T-cell (primary cell): ENCODE measurements at regions of chr1 and their contacts with region 1.

Region 1: GRCh38 chr1:193462629-193463320 is 276.4 kb upstream of the B3GALT2 start:
- DNase-seq: peak in 1 of 35 experiments; percentile 48
- ATAC-seq: peak; percentile 70 to 81 (median 79)
- H3K4me3 ChIP-seq: peak overlapping the region in 1 of 2 donors; percentile 15
- H3K4me3 Mint-ChIP-seq: peak overlapping the region; percentile 55 to 67 (median 66)
- H3K27ac ChIP-seq: peak overlapping the region; percentile 92
- H3K27ac Mint-ChIP-seq: peak overlapping the region; percentile 92 to 96
- H3K4me1 ChIP-seq: peaks cover 5 to 8% of the 10 kb centered on the region in 2 experiments
- H3K4me1 Mint-ChIP-seq: peaks cover 27 to 59% (median 50%) of the 10 kb centered on the region in 3 donors
- H3K27me3 ChIP-seq: no peaks in the 10 kb centered on the region
- H3K27me3 Mint-ChIP-seq: no peaks in the 10 kb centered on the region

Region 2: GRCh38 chr1:193348091-193348768 is 114.5 kb before region 1 on chr1:
- CTCF ChIA-PET with region 1: interaction called in 1 of 2 experiments, 15 read pairs
- POLR2A ChIA-PET with region 1: no interaction called
- DNase-seq: no peak
- ATAC-seq: no peak
- H3K4me3 ChIP-seq: no peak overlapping the region
- H3K4me3 Mint-ChIP-seq: no peak overlapping the region
- H3K27ac ChIP-seq: no peak overlapping the region
- H3K27ac Mint-ChIP-seq: no peak overlapping the region
- H3K4me1 ChIP-seq: no peaks in the 10 kb centered on the region
- H3K4me1 Mint-ChIP-seq: no peaks in the 10 kb centered on the region
- H3K27me3 ChIP-seq: no peaks in the 10 kb centered on the region
- H3K27me3 Mint-ChIP-seq: no peaks in the 10 kb centered on the region

Region 3: GRCh38 chr1:193479187-193479586 is 16.4 kb after region 1 on chr1:
- CTCF ChIA-PET with region 1: interaction called, 5 to 14 read pairs
- POLR2A ChIA-PET with region 1: interaction called in 1 of 2 experiments, 4 read pairs
- DNase-seq: peak; percentile 48 to 94 (median 82)
- ATAC-seq: peak; percentile 93 to 97 (median 94)
- H3K4me3 ChIP-seq: no peak overlapping the region
- H3K4me3 Mint-ChIP-seq: peak overlapping the region; percentile 1 to 56 (median 34)
- H3K27ac ChIP-seq: peak overlapping the region; percentile 88
- H3K27ac Mint-ChIP-seq: peak overlapping the region; percentile 93 to 99
- H3K4me1 ChIP-seq: peaks cover 8 to 10% of the 10 kb centered on the region in 2 experiments
- H3K4me1 Mint-ChIP-seq: peaks cover 61 to 70% (median 66%) of the 10 kb centered on the region in 3 donors
- H3K27me3 ChIP-seq: no peaks in the 10 kb centered on the region
- H3K27me3 Mint-ChIP-seq: no peaks in the 10 kb centered on the region

Region 4: DNA sequence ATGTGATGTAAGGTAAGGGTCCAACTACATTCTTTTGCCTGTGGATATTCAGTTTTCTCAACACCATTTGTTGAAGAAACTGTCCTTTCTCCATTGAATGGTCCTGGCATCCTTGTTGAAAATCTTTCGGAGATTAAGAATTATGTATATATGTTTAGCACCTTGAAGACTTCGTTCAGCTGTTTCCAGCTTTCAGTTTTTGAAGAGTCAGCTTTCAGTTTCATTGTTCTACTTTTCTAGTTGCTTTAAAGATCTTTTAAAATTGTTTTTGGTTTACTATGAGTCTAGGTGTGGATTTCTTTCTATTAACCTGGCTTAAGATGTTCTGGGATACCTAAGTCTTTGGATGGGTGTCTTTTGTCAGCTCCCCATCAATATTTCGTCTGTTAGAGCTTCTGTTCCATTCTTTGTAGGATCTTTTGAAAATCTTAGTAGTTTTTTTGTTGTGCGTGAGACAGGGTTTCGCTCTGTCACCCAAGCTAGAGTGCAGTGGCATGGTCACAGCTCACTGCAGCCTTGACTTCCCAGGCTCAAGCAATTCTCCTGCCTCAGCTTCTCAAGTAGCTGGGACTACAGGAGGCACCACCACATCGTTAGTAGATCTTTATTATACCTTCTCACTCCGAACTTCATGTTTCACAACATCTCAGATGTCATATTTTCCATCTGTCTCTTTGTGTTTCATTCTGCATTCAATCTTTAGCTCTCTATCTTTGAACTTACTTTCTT is 77.1 kb after region 1 on chr1:
- CTCF ChIA-PET with region 1: interaction called, 3 to 4 read pairs
- POLR2A ChIA-PET with region 1: interaction called in 1 of 2 experiments, 10 read pairs
- DNase-seq: peak in 10 of 35 experiments; percentile 0 to 36 (median 12)
- ATAC-seq: peak; percentile 56 to 61 (median 57)
- H3K4me3 ChIP-seq: peak overlapping the region in 1 of 2 donors; percentile 27
- H3K4me3 Mint-ChIP-seq: peak overlapping the region; percentile 69 to 74 (median 73)
- H3K27ac ChIP-seq: peak overlapping the region; percentile 85
- H3K27ac Mint-ChIP-seq: peak overlapping the region; percentile 94 to 97
- H3K4me1 ChIP-seq: peaks cover 0 to 11% of the 10 kb centered on the region in 2 experiments
- H3K4me1 Mint-ChIP-seq: peaks cover 41 to 64% (median 56%) of the 10 kb centered on the region in 3 donors
- H3K27me3 ChIP-seq: no peaks in the 10 kb centered on the region
- H3K27me3 Mint-ChIP-seq: no peaks in the 10 kb centered on the region